ENCODE measurements at regions of chr17 and their contacts with region 1.

Region 1: DNA sequence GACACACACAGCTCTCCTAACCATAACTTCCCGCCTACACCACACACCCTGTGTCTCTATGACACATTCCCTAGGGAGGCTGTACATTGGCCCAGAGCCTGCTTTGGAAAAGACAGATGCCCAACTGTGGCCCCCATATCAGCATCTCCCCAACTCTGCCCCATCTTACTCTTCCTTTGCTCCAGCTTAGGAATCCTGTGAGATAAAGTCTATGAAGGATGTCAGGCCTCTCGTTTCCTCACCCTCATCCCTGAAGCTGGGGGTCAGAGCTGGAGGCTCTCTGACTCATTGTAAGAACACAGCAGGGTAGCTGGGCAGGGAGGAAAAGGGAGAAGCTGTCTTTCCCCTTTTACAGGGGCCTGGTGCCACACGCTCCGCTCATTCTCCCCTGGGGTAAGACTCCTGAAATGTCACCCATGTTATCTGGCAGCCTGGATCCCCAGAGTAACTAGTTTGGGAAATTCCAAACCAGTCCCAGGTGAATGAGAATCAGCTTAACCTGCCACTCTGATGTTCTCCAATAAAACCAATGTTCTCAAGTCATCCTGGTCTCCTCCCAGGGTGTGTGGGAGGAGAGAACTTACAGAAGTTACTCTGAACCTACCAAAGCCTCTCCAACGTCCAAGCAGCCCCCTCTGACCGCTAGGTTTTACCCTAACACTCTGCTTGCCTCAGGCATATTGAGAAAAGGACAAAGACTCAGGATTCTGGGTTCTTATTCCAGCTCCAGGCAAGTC is 2.8 kb downstream of the RAPGEFL1 start:
- DNase-seq: no peak
- ATAC-seq: peak; percentile 62
- H3K4me3 ChIP-seq: no peak overlapping the region
- H3K27ac ChIP-seq: peak overlapping the region; percentile 35; the same call in 1 of the 2 replicates
- H3K4me1 ChIP-seq: peaks cover 12% of the 10 kb centered on the region
- H3K27me3 ChIP-seq: no peaks in the 10 kb centered on the region
- CTCF ChIP-seq: no peak

Region 2: DNA sequence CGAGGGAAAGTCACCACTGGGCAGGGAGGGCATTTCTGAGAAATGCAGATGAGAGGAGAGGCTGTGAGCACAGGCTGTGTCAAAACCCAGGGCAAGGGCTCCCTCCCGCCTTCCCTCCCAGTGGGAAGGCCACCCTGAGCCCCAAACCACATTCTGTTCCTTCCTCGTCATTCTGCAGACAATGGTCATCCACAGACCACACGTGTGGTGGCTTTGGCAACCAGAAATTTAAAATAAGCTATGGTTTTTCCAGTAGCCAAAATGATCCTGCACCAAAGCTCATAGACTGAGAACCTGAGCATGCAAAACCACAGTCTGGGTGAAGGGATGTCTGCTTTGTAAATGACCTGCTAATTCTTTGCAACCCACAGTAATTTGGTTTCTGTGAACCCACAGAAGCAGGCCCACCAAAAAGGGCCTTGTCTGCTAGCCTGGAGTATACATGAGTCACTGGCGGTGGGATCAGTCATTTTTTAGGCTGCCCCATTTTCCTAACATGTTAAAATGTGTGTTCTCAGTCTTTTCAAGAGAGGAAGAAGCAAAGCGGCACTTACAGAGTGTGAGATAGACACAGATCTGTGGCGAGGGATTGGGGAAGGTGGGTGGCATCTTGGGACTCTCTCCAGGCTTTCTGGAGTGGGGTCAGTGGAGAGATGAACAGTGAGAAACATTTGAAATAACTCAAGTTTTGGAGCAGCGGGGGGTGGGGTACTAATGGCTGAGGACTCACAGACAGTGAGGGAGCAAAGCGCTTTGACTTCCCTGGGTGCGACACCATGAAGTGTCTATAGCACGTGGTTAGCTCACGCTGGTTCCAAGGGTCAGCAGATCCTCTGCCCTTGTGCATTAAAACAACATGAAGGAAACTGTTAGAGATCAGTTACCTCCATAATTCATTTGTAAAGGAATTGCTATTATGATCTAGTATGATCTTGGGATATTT is 421.9 kb before region 1 on chr17:
- CTCF ChIA-PET with region 1: no interaction called
- POLR2A ChIA-PET with region 1: no interaction called
- in situ Hi-C with region 1: no loop called
- intact Hi-C with region 1: no loop called
- DNase-seq: no peak
- ATAC-seq: no peak
- H3K4me3 ChIP-seq: no peak overlapping the region
- H3K27ac ChIP-seq: no peak overlapping the region
- H3K4me1 ChIP-seq: peaks cover 9% of the 10 kb centered on the region; the same call in 1 of the 2 replicates
- H3K27me3 ChIP-seq: no peaks in the 10 kb centered on the region; the same call in 1 of the 2 replicates
- CTCF ChIP-seq: no peak

Region 3: DNA sequence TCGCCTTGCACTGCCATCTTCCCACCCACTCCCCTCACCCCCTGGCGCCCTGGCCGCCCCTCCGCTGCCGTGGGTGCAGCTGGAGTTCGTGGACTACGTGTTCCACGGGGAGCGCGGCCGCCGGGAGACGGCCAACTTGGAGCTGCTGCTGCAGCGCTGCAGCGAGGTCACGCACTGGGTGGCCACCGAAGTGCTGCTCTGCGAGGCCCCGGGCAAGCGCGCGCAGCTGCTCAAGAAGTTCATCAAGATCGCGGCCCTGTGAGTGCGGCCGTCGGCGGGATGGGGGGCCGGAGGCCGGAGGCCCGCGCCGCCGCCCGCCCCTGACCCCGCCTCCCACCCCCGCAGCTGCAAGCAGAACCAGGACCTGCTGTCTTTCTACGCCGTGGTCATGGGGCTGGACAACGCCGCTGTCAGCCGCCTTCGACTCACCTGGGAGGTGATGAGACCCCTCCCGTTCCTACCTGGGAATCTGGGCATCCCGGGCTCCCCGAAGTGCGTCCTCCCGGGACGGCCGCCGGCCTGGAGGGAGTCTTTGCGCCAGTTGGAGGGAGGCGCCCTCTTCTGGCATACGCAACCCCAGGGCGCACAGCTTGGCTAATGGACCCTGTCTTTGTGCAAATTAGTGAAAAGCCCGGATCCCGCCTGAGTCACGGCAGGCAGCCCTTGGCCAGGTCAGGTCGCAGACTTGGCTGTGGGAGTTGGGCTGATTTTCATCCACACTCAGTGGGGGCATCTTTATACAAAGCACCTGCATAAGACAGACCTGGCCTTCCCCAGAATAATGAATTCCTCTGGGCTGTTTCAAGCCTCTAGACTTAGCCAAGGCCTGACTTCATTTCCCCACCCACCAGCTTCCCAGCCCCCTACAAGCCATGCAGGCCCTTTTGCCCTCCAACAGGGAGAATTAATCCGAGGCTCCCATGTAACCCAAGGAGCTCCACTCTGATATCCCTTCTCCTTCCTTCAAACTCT is 11.4 kb after region 1 on chr17:
- CTCF ChIA-PET with region 1: interaction called, 11 read pairs
- POLR2A ChIA-PET with region 1: interaction called, 3 read pairs
- in situ Hi-C with region 1: no loop called
- intact Hi-C with region 1: no loop called
- DNase-seq: no peak
- ATAC-seq: peak; percentile 82
- H3K4me3 ChIP-seq: peak overlapping the region; percentile 38 to 56
- H3K27ac ChIP-seq: no peak overlapping the region; the same call in 1 of the 2 replicates
- H3K4me1 ChIP-seq: 0 out of 2 replicates have a peak, but pooled peaks cover 5% of the 10 kb centered on the region
- H3K27me3 ChIP-seq: no peaks in the 10 kb centered on the region
- CTCF ChIP-seq: peak; percentile 85

Region 4: DNA sequence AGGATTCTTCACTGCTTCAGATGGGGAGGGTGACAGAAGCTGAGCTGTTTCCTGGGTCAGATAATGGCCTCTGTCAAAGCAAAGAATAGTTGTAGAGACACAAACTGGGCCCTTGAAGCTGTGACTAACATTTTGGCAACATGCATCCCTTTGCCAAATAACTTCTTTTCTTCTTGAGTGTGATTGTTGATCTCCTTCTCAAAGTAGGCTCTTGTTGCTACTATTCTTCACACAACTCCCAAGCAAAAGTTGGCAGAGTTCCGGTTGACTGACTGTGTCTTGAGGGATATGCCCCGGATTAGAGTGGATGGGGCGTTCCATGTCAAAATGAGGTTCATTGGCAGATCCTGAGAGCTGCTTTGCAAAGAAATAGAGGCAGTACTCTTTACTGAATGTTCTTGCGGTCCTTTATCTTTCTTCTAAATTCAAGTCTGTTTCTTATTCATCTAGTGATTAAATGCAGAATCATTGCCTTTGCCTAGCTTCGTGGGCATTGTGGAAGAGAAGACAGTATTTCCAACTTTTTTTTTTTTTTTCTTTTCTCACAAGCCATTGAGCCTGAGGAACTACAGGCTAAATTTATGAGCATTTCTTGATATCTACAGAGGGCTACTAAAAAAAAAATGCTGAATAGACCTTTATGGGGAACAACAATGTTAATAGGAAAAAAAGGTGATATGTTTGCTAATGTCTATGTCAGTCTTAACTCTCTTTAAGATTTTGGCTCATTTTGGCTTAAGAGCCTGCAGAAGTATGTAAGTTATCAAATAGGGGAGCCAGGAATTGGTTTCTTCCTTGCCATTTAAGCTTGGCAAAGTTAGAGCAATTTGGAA is 44.8 kb after region 1 on chr17:
- CTCF ChIA-PET with region 1: no interaction called
- POLR2A ChIA-PET with region 1: interaction called, 20 read pairs
- in situ Hi-C with region 1: no loop called
- intact Hi-C with region 1: no loop called
- DNase-seq: no peak
- ATAC-seq: no peak
- H3K4me3 ChIP-seq: no peak overlapping the region
- H3K27ac ChIP-seq: 0 out of 2 replicates have a peak overlapping the region, but pooled peaks have one; percentile 9
- H3K4me1 ChIP-seq: no peaks in the 10 kb centered on the region
- H3K27me3 ChIP-seq: no peaks in the 10 kb centered on the region
- CTCF ChIP-seq: no peak

Measured in Panc1 (cell line).